ENCODE measurements at regions of chr5 and their contacts with region 1.

Region 1: DNA sequence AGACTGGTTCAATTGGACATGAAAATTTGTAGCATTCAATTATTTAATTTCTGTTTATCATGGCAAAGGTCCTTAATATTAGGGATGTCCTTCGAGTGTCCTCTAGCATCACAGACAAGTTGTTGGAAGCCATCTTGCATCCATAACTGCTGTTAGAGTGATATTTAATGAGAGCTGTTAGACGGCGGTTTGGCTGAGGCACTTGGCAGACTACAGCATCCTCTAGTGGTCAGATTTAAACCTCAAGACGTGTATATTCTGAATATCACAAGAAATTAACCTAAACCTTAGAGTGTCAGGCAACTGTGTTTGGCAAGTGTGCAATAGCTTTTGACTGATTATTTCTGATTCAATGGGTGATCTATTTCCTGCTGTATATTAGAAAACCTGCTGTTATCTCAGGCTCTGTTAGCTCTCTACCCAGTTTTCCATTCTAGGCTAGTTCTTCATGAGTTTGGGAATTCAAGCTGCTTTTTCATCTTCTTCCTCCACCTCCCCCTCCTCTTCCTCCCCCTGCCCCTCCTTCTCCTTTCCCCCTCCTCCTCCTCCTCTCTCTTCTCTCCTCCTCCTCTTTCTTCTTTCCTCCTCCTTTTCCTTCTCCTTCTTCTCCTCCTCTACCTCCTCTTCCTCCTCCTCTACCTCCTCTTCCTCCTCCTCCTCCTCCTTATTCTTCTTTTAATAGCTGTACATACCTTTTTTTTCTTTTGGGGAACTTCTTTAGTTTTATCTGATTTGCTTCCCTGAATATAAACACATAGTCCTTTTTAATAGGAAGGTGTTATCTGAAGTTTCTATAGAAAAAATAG is 8.6 kb downstream of the SPINK1 start:
- DNase-seq: peak; percentile 32
- H3K4me3 ChIP-seq: no peak overlapping the region
- H3K27ac ChIP-seq: no peak overlapping the region
- H3K4me1 ChIP-seq: no peaks in the 10 kb centered on the region
- H3K27me3 ChIP-seq: no peaks in the 10 kb centered on the region
- CTCF ChIP-seq: peak; percentile 65 to 90 (median 78)
- POLR2A ChIP-seq: no peak

Region 2: GRCh38 chr5:147628058-147628895 is 194.6 kb before region 1 on chr5:
- intact Hi-C with region 1: loop called (anchors 1 kb)
- DNase-seq: peak; percentile 60
- H3K4me3 ChIP-seq: no peak overlapping the region
- H3K27ac ChIP-seq: no peak overlapping the region
- H3K4me1 ChIP-seq: no peaks in the 10 kb centered on the region
- H3K27me3 ChIP-seq: no peaks in the 10 kb centered on the region
- CTCF ChIP-seq: peak; percentile 36 to 84 (median 76)
- POLR2A ChIP-seq: no peak

Measured in prostate gland (tissue), 2 donors.